Activated T-helper 1 cell treated with anti-CD3 and anti-CD28 coated beads, Interleukin-12 subunit alpha, Interleukin-12 subunit beta, Interleukin-2, Interleukin-4 antibody, amounts not matched to agents 30 ng/mL and 10 ng/mL and 1 ng/mL, durations not matched to agents 14 hours and 24 hours and 36 hours (primary cell): ENCODE measurements at regions of chrX and their contacts with region 1.

Region 1: GRCh38 chrX:153927922-153928760 is 2.1 kb upstream of the ARHGAP4 start:
- DNase-seq: peak; percentile 91
- H3K4me3 Mint-ChIP-seq: peak overlapping the region; percentile 91
- H3K27ac Mint-ChIP-seq: peak overlapping the region; percentile 97
- H3K4me1 Mint-ChIP-seq: peaks cover 24% of the 10 kb centered on the region
- H3K27me3 Mint-ChIP-seq: no peaks in the 10 kb centered on the region

Region 2: GRCh38 chrX:153599192-153600031 is 328.7 kb before region 1 on chrX:
- intact Hi-C with region 1: loop called (anchors 1 kb)
- DNase-seq: peak; percentile 87
- H3K4me3 Mint-ChIP-seq: peak overlapping the region; percentile 89
- H3K27ac Mint-ChIP-seq: peak overlapping the region; percentile 59
- H3K4me1 Mint-ChIP-seq: peaks cover 30% of the 10 kb centered on the region
- H3K27me3 Mint-ChIP-seq: peaks cover 1% of the 10 kb centered on the region

Region 3: GRCh38 chrX:153763989-153764755 is 164.0 kb before region 1 on chrX and contains the start of gene PLXNB3:
- intact Hi-C with region 1: loop called (anchors 5 kb)
- DNase-seq: peak; percentile 58
- H3K4me3 Mint-ChIP-seq: no peak within 1 kb of the TSS
- H3K27ac Mint-ChIP-seq: no peak within 1 kb of the TSS
- H3K4me1 Mint-ChIP-seq: peaks cover 5% of the 10 kb centered on the region
- H3K27me3 Mint-ChIP-seq: peaks cover 5% of the 10 kb centered on the region
- total RNA-seq, gene PLXNB3: 0.21 and 0.81 TPM in 2 replicates

Region 4: GRCh38 chrX:153875391-153876111 is 52.6 kb before region 1 on chrX:
- intact Hi-C with region 1: loop called (anchors 1 kb)
- DNase-seq: peak; percentile 54
- H3K4me3 Mint-ChIP-seq: no peak overlapping the region
- H3K27ac Mint-ChIP-seq: no peak overlapping the region
- H3K4me1 Mint-ChIP-seq: peaks cover 24% of the 10 kb centered on the region
- H3K27me3 Mint-ChIP-seq: peaks cover 5% of the 10 kb centered on the region

Region 5: DNA sequence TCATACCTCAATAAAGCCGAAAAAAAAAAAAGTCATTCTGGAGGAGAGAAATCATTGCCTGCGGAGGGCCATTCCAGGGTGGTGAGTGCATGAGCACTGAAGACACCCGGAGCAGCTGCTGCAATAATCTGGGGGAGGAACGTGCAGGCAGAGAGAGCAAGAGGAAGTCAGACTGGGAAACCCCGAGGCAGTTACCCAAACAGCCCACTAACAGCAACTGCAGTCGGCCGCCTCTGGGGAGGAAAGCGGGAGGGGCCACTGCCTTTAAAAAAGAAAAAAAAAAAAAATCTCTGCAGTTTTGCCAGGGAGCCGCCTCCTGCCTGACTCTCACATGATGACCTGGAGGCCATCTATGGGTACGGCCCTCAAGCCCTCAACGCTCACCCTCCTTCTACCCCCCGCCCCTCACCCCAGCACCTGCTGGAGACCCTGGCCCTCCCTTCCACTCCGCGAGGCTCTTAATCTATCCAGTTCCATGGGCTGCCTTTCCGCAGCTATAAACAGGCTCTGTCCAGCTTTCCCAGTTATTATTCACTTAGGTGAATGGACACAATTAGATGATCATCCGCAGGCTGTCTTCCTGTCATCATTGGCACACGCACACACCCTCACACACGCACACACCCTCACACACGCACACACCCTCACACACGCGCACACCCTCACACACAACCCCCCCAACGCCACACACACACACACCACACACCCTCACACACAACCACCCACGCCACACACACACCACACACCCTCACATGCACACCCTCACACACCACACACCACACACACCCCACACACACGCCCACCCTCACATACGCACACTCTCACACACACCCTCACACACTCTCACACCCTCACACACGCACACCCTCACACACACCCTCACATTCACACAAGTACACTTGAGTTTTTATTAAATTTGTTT is 27.0 kb before region 1 on chrX:
- intact Hi-C with region 1: no loop called
- DNase-seq: peak; percentile 58
- H3K4me3 Mint-ChIP-seq: peak overlapping the region; percentile 51
- H3K27ac Mint-ChIP-seq: peak overlapping the region; percentile 58
- H3K4me1 Mint-ChIP-seq: peaks cover 29% of the 10 kb centered on the region
- H3K27me3 Mint-ChIP-seq: no peaks in the 10 kb centered on the region

Region 6: DNA sequence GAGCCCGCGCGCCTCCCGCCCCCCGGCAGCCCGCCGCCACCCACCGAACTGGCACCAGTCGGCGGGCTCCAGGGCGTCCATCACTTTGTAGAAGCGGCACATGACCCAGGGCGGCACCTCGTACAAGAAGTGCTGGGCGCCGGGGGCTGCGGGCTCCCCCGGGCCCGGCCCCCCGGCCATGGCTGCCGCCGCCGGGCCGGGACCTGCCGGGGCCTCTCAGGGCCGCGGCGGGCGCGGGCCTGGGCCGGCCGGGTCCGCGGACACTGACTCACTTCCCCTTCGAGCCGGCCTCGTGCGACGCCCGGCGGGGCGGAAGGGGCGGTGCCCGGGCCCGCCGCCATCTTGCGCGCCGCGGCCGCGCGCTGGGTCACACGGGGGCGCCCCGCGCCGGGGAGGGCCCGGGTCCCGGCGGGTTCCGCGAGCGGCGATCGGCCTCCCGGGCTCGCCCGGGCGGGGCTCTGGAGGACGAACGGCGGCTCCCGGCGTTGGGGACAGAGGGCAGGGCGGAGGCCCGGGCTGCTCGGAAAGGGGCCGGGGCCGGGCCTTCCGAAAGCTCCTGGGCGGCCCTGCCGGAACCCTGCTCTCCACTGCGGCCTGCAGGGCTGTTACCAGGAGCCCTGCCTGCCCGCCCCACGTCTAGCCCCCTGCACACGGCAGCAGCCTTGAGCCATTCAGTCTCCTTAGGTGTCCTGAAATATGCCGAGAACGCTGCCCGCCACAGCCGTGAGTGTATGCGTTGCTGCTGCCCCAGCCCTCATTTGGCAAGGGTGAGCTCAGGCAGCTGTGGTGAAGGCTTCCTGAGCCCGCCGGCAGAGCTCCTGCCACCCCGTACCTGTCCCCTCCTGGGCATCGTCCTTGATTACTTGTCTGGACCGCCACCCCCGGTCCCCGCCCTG is 91.7 kb after region 1 on chrX and contains the start of gene IRAK1:
- intact Hi-C with region 1: loop called (anchors 1 kb)
- DNase-seq: peak; percentile 57
- H3K4me3 Mint-ChIP-seq: peak within 1 kb of the TSS; percentile 94
- H3K27ac Mint-ChIP-seq: peak within 1 kb of the TSS; percentile 89
- H3K4me1 Mint-ChIP-seq: peaks cover 4% of the 10 kb centered on the region
- H3K27me3 Mint-ChIP-seq: no peaks in the 10 kb centered on the region
- total RNA-seq, gene IRAK1: 165 and 172 TPM in 2 replicates

Region 7: GRCh38 chrX:154370882-154371770 is 443.0 kb after region 1 on chrX:
- intact Hi-C with region 1: loop called (anchors 2 kb)
- DNase-seq: peak; percentile 88
- H3K4me3 Mint-ChIP-seq: peak overlapping the region; percentile 84
- H3K27ac Mint-ChIP-seq: peak overlapping the region; percentile 63
- H3K4me1 Mint-ChIP-seq: peaks cover 11% of the 10 kb centered on the region
- H3K27me3 Mint-ChIP-seq: no peaks in the 10 kb centered on the region

Region 8: DNA sequence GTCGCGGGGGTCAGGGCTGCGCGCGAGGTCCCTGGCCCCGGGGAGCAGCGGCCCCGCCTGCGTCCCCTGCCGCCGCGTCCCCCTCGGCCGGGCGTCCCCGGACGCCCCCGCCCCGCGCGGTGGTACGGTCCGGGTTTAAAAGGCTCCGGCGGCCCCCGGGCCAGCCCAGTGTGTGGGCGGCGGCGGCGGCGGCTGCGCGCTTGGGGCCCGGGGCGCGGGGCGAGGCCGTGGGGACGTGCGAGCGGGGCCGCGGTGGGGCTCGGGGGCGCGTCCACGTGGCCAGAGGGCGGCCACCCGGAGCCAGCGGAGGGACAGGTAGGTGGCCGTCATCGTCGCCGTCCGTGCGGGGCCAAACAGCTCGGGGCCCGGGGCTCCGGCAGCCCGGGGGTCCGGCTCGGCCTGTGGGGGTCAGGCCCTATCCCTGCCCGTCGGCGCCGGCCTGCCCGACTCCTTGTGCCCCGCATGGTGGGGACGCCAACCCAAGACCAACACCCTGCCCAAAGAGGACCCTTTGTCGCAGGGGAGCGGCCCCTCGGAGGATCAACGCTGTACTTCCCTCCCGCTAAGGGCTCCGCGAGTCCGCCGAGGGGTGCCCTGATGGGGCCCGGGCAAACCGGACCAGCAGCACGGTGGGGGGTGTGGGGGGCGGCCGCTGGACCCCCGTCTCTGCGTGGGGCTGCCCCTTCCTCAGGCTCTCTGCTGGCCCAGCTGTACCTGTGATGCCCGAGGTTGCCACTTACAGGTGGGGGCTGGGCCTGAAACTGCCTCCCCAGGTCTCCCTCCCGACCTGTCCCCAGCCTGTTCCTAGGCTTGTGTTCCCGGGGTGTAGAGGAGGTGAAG is 530.2 kb after region 1 on chrX and contains the start of gene PLXNA3:
- intact Hi-C with region 1: no loop called
- DNase-seq: peak; percentile 38
- H3K4me3 Mint-ChIP-seq: peak within 1 kb of the TSS; percentile 96
- H3K27ac Mint-ChIP-seq: peak within 1 kb of the TSS; percentile 94
- H3K4me1 Mint-ChIP-seq: peaks cover 5% of the 10 kb centered on the region
- H3K27me3 Mint-ChIP-seq: no peaks in the 10 kb centered on the region
- total RNA-seq, gene PLXNA3: 45.4 and 61.1 TPM in 2 replicates

Region 9: GRCh38 chrX:154478728-154479622 is 550.8 kb after region 1 on chrX and contains the start of gene LAGE3:
- intact Hi-C with region 1: loop called (anchors 5 kb)
- DNase-seq: peak; percentile 93
- H3K4me3 Mint-ChIP-seq: peak within 1 kb of the TSS; percentile 88
- H3K27ac Mint-ChIP-seq: peak within 1 kb of the TSS; percentile 91
- H3K4me1 Mint-ChIP-seq: peaks cover 23% of the 10 kb centered on the region
- H3K27me3 Mint-ChIP-seq: no peaks in the 10 kb centered on the region
- total RNA-seq, gene LAGE3: 60.3 and 63.2 TPM in 2 replicates